ENCODE measurements at regions of chr6 and their contacts with region 1.

Region 1: DNA sequence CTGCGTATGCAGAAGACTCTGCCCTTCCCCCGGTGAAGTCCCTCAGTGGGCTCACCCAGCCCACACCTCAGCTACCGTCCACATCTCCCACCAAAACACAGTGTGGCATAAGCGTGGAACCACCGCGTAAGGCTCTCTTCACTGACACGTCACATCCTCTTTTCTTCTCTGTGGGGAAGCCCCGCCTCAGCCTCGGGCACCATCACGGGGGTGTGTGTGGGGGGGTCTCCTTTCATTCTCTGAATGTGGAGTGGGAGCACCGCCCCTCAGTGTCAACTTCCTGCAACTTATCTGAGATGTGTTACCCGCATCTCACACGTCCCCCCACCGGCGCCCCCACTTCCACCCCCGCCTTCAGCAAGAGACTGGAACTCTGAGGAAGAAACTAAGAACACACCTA is 388.4 kb upstream of the JARID2 start:
- DNase-seq: peak; percentile 42
- H3K4me3 Mint-ChIP-seq: peak overlapping the region; percentile 51
- H3K27ac Mint-ChIP-seq: peak overlapping the region; percentile 96
- H3K4me1 Mint-ChIP-seq: peaks cover 42% of the 10 kb centered on the region
- H3K27me3 Mint-ChIP-seq: no peaks in the 10 kb centered on the region

Region 2: DNA sequence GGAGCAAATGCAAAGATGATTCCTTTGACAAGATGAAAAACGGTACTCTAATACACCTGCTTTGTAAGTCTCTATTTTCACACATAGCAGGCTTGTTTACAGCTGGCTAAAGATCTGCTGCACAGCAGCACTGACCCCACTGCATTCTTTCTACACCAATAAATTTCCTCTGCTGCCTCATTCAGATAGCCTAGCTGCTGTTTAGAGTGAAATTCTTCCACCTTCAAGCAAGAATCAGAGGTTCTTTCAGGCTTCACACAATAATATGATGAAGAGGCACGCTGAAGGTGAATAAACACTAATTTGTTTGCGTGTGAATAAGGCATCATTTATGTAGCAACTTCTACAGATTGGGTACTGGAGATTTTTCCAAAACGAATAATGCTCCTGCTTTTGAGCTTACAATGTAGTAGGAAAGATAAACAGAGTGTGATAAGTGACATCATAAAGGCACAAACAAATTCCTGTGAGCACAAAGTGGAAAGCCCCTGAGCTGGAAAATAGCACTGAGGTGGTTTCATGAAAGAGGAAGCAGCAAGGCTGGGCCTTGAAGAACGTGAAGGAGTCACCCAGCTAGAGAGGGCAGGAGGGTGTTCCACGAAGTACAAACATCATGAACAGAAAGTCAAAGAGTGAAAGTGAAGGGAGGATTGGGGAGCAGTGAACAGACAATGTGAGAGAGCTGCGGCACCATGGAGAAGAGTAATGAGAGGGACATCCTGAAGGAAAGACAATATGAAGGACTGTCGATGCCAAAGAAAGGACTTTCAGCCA is 196.5 kb before region 1 on chr6:
- intact Hi-C with region 1: loop called (anchors 5 kb)
- DNase-seq: peak; percentile 59
- H3K4me3 Mint-ChIP-seq: no peak overlapping the region
- H3K27ac Mint-ChIP-seq: no peak overlapping the region
- H3K4me1 Mint-ChIP-seq: peaks cover 59% of the 10 kb centered on the region
- H3K27me3 Mint-ChIP-seq: peaks cover 16% of the 10 kb centered on the region

Region 3: DNA sequence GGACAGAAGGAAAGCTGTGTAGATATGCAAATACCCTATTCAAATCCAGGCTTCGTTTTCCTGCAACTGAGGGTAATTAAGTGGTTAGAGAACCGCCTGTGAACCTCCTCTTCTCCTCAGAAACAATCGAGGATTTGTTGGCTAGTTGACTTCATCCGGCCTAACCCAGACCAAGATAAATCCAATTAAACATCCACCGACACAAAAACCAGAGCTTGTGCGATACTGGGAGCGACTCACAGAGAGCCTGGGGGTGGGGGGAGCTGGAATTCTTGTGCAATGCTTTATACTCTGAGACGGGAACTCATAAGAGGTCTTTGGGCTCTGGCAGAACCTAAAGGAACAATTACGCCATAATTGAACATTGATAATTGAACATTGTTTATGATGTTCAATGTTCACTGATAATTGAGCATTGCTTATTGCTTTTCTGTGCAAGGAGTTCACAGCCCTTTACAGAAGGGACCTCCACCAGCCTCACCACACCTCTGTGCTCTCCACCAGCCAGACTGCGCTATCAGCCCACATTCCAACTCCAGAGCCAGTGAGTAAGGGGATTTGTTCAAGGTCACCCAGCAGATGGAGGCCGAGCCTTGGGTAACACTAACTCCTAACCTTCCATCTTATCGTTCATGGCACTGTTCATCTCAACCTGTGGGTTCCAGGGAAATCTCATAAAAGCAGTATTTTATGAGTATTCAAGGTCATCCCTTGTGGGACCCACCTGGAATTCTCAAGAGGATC is 41.2 kb before region 1 on chr6:
- intact Hi-C with region 1: loop called (anchors 1 kb)
- DNase-seq: no peak
- H3K4me3 Mint-ChIP-seq: no peak overlapping the region
- H3K27ac Mint-ChIP-seq: no peak overlapping the region
- H3K4me1 Mint-ChIP-seq: peaks cover 22% of the 10 kb centered on the region
- H3K27me3 Mint-ChIP-seq: peaks cover 3% of the 10 kb centered on the region

Region 4: GRCh38 chr6:14881398-14881797 is 23.9 kb after region 1 on chr6:
- intact Hi-C with region 1: no loop called
- DNase-seq: no peak
- H3K4me3 Mint-ChIP-seq: no peak overlapping the region
- H3K27ac Mint-ChIP-seq: no peak overlapping the region
- H3K4me1 Mint-ChIP-seq: peaks cover 32% of the 10 kb centered on the region
- H3K27me3 Mint-ChIP-seq: peaks cover under 1% of the 10 kb centered on the region

Region 5: DNA sequence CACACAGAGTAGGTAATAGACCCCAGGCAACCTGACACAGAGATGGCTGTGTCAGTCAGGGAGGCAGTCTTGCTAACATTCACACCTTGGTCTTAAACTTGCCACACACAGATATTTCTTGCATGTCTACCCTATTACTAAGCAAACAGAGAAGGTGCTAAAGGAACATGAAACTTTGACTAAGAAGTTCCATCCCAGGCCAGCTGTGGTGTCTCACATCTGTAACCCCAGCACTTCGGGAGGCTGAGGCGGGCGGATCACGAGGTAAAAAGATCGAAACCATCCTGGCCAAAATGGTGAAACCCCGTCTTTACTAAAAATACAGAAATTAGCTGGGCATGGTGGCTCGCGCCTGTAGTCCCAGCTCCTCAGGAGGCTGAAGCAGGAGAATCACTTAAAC is 165.9 kb after region 1 on chr6:
- intact Hi-C with region 1: no loop called
- DNase-seq: peak; percentile 48
- H3K4me3 Mint-ChIP-seq: peak overlapping the region; percentile 31
- H3K27ac Mint-ChIP-seq: peak overlapping the region; percentile 94
- H3K4me1 Mint-ChIP-seq: peaks cover 53% of the 10 kb centered on the region
- H3K27me3 Mint-ChIP-seq: no peaks in the 10 kb centered on the region